CD4-positive, alpha-beta memory T cell (primary cell): ENCODE measurements at regions of chr11 and their contacts with region 1.

Region 1: GRCh38 chr11:88552377-88553062 is 215.0 kb upstream of the CTSC start:
- DNase-seq: peak; percentile 31 to 45 (median 40)
- H3K4me3 ChIP-seq: no peak overlapping the region
- H3K4me3 Mint-ChIP-seq: no peak overlapping the region
- H3K27ac ChIP-seq: no peak overlapping the region
- H3K27ac Mint-ChIP-seq: no peak overlapping the region
- H3K4me1 ChIP-seq: no peaks in the 10 kb centered on the region
- H3K4me1 Mint-ChIP-seq: peaks cover 0 to 3% (median 0%) of the 10 kb centered on the region in 4 donors
- H3K27me3 ChIP-seq: no peaks in the 10 kb centered on the region
- H3K27me3 Mint-ChIP-seq: peaks cover 1 to 7% of the 10 kb centered on the region in 2 donors

Region 2: GRCh38 chr11:87352759-87353707 is 1199.5 kb before region 1 on chr11:
- CTCF ChIA-PET with region 1: interaction called, 12 read pairs
- POLR2A ChIA-PET with region 1: no interaction called
- intact Hi-C with region 1: no loop called
- DNase-seq: peak; percentile 51 to 71 (median 67)
- H3K4me3 ChIP-seq: no peak overlapping the region
- H3K4me3 Mint-ChIP-seq: peak overlapping the region in 2 of 8 donors; percentile 23 to 24
- H3K27ac ChIP-seq: no peak overlapping the region
- H3K27ac Mint-ChIP-seq: peak overlapping the region in 1 of 7 donors; percentile 19
- H3K4me1 ChIP-seq: peaks cover 9% of the 10 kb centered on the region
- H3K4me1 Mint-ChIP-seq: peaks cover 7 to 14% (median 11%) of the 10 kb centered on the region in 4 donors
- H3K27me3 ChIP-seq: no peaks in the 10 kb centered on the region
- H3K27me3 Mint-ChIP-seq: peaks cover 4 to 6% of the 10 kb centered on the region in 2 donors

Region 3: GRCh38 chr11:88016392-88017170 is 535.9 kb before region 1 on chr11:
- CTCF ChIA-PET with region 1: interaction called, 110 read pairs
- POLR2A ChIA-PET with region 1: no interaction called
- intact Hi-C with region 1: no loop called
- DNase-seq: peak; percentile 52 to 61 (median 54)
- H3K4me3 ChIP-seq: no peak overlapping the region
- H3K4me3 Mint-ChIP-seq: no peak overlapping the region
- H3K27ac ChIP-seq: no peak overlapping the region
- H3K27ac Mint-ChIP-seq: no peak overlapping the region
- H3K4me1 ChIP-seq: no peaks in the 10 kb centered on the region
- H3K4me1 Mint-ChIP-seq: no peaks in the 10 kb centered on the region
- H3K27me3 ChIP-seq: no peaks in the 10 kb centered on the region
- H3K27me3 Mint-ChIP-seq: peaks cover 3 to 6% of the 10 kb centered on the region in 2 donors

Region 4: GRCh38 chr11:88231894-88232482 is 320.5 kb before region 1 on chr11:
- CTCF ChIA-PET with region 1: interaction called, 24 read pairs
- POLR2A ChIA-PET with region 1: no interaction called
- intact Hi-C with region 1: no loop called
- DNase-seq: peak in 3 of 5 donors; percentile 20 to 35 (median 22)
- H3K4me3 ChIP-seq: no peak overlapping the region
- H3K4me3 Mint-ChIP-seq: no peak overlapping the region
- H3K27ac ChIP-seq: no peak overlapping the region
- H3K27ac Mint-ChIP-seq: no peak overlapping the region
- H3K4me1 ChIP-seq: no peaks in the 10 kb centered on the region
- H3K4me1 Mint-ChIP-seq: no peaks in the 10 kb centered on the region
- H3K27me3 ChIP-seq: no peaks in the 10 kb centered on the region
- H3K27me3 Mint-ChIP-seq: no peaks in the 10 kb centered on the region

Region 5: GRCh38 chr11:88494848-88495247 is 57.7 kb before region 1 on chr11:
- CTCF ChIA-PET with region 1: no interaction called
- POLR2A ChIA-PET with region 1: no interaction called
- intact Hi-C with region 1: no loop called
- DNase-seq: no peak
- H3K4me3 ChIP-seq: no peak overlapping the region
- H3K4me3 Mint-ChIP-seq: no peak overlapping the region
- H3K27ac ChIP-seq: no peak overlapping the region
- H3K27ac Mint-ChIP-seq: peak overlapping the region in 1 of 7 donors; percentile 7
- H3K4me1 ChIP-seq: no peaks in the 10 kb centered on the region
- H3K4me1 Mint-ChIP-seq: no peaks in the 10 kb centered on the region
- H3K27me3 ChIP-seq: no peaks in the 10 kb centered on the region
- H3K27me3 Mint-ChIP-seq: no peaks in the 10 kb centered on the region

Region 6: DNA sequence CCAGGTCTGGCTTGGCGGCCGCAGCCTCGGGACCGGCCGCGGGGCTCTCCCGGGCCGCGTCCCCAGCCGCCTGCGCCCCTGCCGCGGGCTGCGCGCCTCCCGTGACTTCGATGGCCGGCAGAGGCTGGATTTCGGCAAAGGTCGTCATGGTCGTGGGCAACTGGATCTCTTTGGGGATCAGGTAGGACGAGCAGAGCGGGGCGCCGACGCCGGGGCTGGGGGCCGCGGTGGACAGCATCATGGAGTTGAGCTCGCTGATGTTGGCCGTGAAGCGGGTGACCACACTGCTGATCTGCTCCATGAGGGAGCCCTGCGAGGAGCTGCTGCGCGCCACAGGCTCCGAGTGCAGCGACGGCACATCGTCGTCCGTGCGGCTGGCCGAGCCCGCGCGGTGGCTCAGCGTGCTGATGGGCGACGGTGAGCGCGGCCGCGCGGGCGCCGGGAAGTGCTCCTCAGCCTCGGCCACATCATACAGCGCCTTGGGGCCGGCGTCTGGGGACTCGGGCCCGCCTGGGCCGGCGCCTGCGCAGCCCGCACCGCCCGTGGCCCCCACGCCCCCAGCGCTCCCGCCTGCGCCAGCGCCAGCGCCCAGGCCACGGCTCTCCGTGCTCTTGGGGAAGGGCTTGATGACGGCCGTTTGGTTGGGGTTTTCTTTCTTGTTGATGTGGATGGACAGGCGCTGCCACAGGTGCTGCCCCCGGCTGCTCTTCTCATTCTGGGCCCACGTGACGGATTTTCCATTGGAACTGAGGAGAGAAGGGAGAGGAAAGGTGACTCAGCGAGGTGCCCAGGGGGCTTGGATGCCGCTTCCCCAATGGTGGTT is 43.5 kb before region 1 on chr11:
- CTCF ChIA-PET with region 1: no interaction called
- POLR2A ChIA-PET with region 1: no interaction called
- intact Hi-C with region 1: no loop called
- DNase-seq: peak in 2 of 5 donors; percentile 7 to 13
- H3K4me3 ChIP-seq: peak overlapping the region in 1 of 2 donors; percentile 26
- H3K4me3 Mint-ChIP-seq: peak overlapping the region; percentile 73 to 82 (median 78)
- H3K27ac ChIP-seq: no peak overlapping the region
- H3K27ac Mint-ChIP-seq: no peak overlapping the region
- H3K4me1 ChIP-seq: peaks cover 12% of the 10 kb centered on the region
- H3K4me1 Mint-ChIP-seq: peaks cover 7 to 16% (median 12%) of the 10 kb centered on the region in 4 donors
- H3K27me3 ChIP-seq: peaks cover 32% of the 10 kb centered on the region
- H3K27me3 Mint-ChIP-seq: peaks cover 36 to 40% of the 10 kb centered on the region in 2 donors